ENCODE measurements at regions of chr2 and their contacts with region 1.

Region 1: DNA sequence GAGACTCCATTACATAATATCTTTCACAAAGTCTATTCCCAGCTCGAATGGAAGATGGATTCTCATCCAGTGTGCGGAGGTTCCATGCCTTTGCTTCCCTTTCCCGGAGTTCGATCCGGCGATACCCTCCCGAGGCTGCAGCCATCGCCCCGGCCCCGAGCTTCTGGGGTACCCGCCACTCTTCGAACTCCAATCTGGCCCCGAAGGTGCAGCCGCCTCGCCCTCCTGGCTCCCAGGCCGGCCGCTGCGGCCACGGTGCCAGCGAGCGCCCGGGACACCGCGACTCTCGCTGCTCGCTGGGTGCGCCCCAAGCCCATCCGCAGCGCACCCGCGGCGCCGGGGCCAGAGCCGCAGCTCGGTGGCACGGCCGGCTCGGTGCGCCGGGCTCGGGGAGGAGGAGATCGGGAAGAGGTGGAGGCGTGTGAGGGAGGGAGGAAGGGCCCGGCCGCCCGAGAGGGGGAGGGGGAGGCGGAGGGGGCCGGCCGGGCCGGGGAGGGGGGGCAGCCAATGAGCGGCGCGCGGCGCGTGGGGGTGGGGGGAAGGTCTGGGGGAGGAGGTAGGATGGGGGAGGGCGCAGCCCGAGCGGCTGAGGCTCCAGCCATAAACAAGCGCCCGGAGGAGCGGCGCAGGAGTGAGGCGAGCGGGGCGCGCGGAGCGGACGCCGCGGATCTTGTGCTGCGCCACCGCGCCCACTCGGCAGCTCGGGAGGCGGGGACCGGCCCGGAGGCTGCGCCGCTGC is at the start of gene CRIM1:
- DNase-seq: peak; percentile 69 to 89 (median 81)
- ATAC-seq: peak; percentile 71 to 81 (median 74)
- H3K4me3 ChIP-seq: peak within 1 kb of the TSS; percentile 54 to 63 (median 57)
- H3K27ac ChIP-seq: peak within 1 kb of the TSS; percentile 72 to 74 (median 73)
- H3K4me1 ChIP-seq: peaks cover 0 to 16% (median 4%) of the 10 kb centered on the region in 4 donors
- H3K27me3 ChIP-seq: peaks cover 0 to 7% of the 10 kb centered on the region in 2 donors
- CTCF ChIP-seq: no peak
- POLR2A ChIP-seq: peak; percentile 77
- total RNA-seq, gene CRIM1: 4.2 to 30.5 (median 16.7) TPM

Region 2: DNA sequence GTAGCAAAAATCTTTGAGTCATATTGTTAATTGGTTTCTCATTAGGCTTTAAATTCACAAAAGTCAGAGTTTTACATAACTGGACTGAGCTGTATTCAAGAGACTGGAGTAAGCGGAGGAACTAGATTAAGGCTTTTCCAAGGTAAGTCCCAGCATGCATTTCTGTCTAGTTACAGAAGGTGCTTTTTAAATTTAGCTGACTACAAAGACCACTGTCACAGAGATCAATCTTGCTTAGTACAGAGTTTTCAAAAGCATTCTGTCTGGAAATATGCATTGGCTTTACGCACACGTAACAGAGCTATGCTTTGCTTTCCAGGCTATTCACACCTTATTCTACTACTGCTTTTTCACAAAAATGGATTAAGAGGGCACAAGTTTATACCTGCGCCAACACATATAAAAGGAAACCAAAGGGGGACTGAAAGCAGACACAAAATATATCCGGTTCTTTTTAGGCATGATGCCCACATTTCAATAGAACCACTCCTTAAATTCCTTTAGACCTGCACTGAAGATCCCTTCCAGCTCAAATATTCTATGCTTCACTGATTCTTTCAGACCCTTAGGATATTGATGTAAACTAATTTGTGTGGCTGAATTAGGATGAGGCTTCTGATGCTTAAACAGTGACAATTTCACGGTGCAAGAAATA is 560.4 kb before region 1 on chr2:
- intact Hi-C with region 1: no loop called
- DNase-seq: no peak
- ATAC-seq: no peak
- H3K4me3 ChIP-seq: no peak overlapping the region
- H3K27ac ChIP-seq: no peak overlapping the region
- H3K4me1 ChIP-seq: no peaks in the 10 kb centered on the region
- H3K27me3 ChIP-seq: no peaks in the 10 kb centered on the region
- CTCF ChIP-seq: no peak
- POLR2A ChIP-seq: no peak

Region 3: GRCh38 chr2:36650031-36650430 is 294.7 kb after region 1 on chr2:
- intact Hi-C with region 1: loop called in 1 of 2 experiments (anchors 10 kb)
- DNase-seq: no peak
- ATAC-seq: peak in 1 of 4 donors; percentile 71
- H3K4me3 ChIP-seq: no peak overlapping the region
- H3K27ac ChIP-seq: no peak overlapping the region
- H3K4me1 ChIP-seq: no peaks in the 10 kb centered on the region
- H3K27me3 ChIP-seq: no peaks in the 10 kb centered on the region
- CTCF ChIP-seq: no peak
- POLR2A ChIP-seq: no peak

Region 4: GRCh38 chr2:37664231-37664643 is 1308.9 kb after region 1 on chr2:
- intact Hi-C with region 1: no loop called
- DNase-seq: no peak
- ATAC-seq: no peak
- H3K4me3 ChIP-seq: no peak overlapping the region
- H3K27ac ChIP-seq: no peak overlapping the region
- H3K4me1 ChIP-seq: peaks cover 0 to 6% (median 0%) of the 10 kb centered on the region in 4 donors
- H3K27me3 ChIP-seq: no peaks in the 10 kb centered on the region
- CTCF ChIP-seq: no peak
- POLR2A ChIP-seq: no peak

Measured in right lobe of liver (tissue), 6 donors.